ENCODE measurements at regions of chr16 and their contacts with region 1.

Region 1: DNA sequence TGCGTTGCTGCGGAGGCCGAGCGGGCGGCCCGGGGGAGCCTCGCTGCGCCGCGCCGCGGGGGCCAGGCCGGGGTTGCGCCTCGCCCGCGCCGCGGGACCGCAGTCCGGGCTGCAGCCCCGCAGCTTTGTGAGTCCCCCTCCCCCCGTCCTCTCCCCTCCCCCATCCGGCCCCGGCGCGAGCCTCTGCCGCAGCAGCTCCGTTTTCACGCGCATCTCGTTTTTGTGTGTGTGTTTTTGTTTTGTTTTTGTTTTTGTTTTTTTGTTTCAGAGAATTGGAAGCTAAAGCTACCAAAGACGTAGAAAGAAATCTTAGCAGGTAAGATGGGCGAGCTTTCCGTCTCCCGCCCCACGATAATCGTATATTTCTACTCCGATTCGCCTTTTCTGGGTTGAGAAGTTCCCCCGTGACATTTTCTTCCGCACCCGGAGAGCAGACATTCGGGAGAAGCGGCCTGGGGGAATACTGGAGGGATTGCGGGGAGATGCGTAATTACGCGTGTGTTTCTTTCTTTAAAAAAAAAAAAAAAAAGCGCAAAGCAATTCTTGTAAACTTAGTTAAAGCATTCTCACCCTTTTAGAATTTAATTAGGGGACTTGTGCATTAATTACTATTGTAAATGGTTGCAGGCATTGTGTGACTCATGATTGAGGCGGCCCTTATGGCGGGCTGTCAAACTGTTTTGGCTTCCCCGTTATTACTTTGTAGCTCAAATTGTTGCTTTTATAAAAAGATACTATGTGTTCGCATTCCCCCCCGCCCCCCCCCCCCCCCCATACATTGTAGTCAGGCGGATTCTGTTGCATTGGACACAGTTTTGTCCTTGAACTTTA is 749 bp downstream of the TNRC6A start:
- DNase-seq: peak; percentile 16 to 63
- ATAC-seq: peak in 2 of 3 donors; percentile 37 to 56
- H3K4me3 ChIP-seq: peak overlapping the region; percentile 64
- H3K4me3 Mint-ChIP-seq: peak overlapping the region; percentile 94
- H3K27ac ChIP-seq: peak overlapping the region; percentile 63
- H3K27ac Mint-ChIP-seq: peak overlapping the region; percentile 89 to 95
- H3K4me1 ChIP-seq: peaks cover 6% of the 10 kb centered on the region
- H3K4me1 Mint-ChIP-seq: peaks cover 36 to 44% of the 10 kb centered on the region in 2 donors
- H3K27me3 ChIP-seq: no peaks in the 10 kb centered on the region
- H3K27me3 Mint-ChIP-seq: peaks cover 0 to 2% of the 10 kb centered on the region in 2 donors
- CTCF ChIP-seq: no peak

Region 2: GRCh38 chr16:24539291-24539849 is 190.8 kb before region 1 on chr16 and contains the start of gene RBBP6:
- intact Hi-C with region 1: loop called (anchors 10 kb)
- DNase-seq: peak; percentile 95 to 97
- ATAC-seq: peak; percentile 85 to 98 (median 90)
- H3K4me3 ChIP-seq: peak within 1 kb of the TSS; percentile 97
- H3K4me3 Mint-ChIP-seq: peak within 1 kb of the TSS; percentile 100
- H3K27ac ChIP-seq: peak within 1 kb of the TSS; percentile 100
- H3K27ac Mint-ChIP-seq: peak within 1 kb of the TSS; percentile 99
- H3K4me1 ChIP-seq: peaks cover 20% of the 10 kb centered on the region
- H3K4me1 Mint-ChIP-seq: peaks cover 43 to 44% of the 10 kb centered on the region in 2 donors
- H3K27me3 ChIP-seq: no peaks in the 10 kb centered on the region
- H3K27me3 Mint-ChIP-seq: no peaks in the 10 kb centered on the region
- CTCF ChIP-seq: peak; percentile 18
- total RNA-seq, gene RBBP6: 155 to 219 (median 173) TPM

Region 3: GRCh38 chr16:24681809-24682511 is 48.2 kb before region 1 on chr16:
- intact Hi-C with region 1: no loop called
- DNase-seq: no peak
- ATAC-seq: no peak
- H3K4me3 ChIP-seq: no peak overlapping the region
- H3K4me3 Mint-ChIP-seq: no peak overlapping the region
- H3K27ac ChIP-seq: no peak overlapping the region
- H3K27ac Mint-ChIP-seq: no peak overlapping the region
- H3K4me1 ChIP-seq: no peaks in the 10 kb centered on the region
- H3K4me1 Mint-ChIP-seq: no peaks in the 10 kb centered on the region
- H3K27me3 ChIP-seq: no peaks in the 10 kb centered on the region
- H3K27me3 Mint-ChIP-seq: peaks cover 4 to 20% of the 10 kb centered on the region in 2 donors
- CTCF ChIP-seq: no peak